PC-9 (cell line): ENCODE measurements at regions of chr6 and their contacts with region 1.

Region 1: DNA sequence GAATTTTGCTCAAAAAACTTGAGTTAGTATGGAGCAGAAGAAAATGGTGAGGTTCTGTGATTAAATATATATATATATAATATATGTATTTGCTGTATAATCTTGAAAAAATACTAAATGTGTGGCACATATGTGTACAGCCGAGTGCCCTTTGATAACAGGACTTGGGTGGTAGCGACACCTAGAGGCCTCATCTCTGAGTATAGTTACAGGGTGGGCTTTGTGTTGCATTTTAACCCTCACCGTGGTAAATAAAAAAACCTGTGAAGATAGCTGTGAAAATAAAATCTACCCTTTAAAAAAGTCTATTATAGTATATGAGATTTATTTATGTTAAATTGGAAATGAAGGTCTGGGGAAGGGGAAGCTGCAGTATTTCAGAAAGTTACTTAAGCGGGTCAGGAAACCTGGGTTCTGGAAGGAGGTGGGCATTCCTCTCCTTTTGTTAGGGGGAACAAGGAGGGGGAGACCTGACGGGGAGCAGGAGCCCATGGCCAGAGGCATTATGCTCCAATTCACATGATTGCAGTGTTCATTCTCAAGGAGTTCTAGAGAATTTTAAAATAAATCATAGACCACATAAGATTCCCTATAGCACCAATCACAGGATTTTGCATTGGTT is 82.7 kb downstream of the SH3BGRL2 start:
- DNase-seq: peak in 1 of 2 experiments; percentile 45
- H3K4me3 ChIP-seq: no peak overlapping the region
- H3K27ac ChIP-seq: no peak overlapping the region
- H3K4me1 ChIP-seq: no peaks in the 10 kb centered on the region
- H3K27me3 ChIP-seq: no peaks in the 10 kb centered on the region
- CTCF ChIP-seq: peak; percentile 75

Region 2: GRCh38 chr6:79466207-79466834 is 247.5 kb before region 1 on chr6:
- CTCF ChIA-PET with region 1: no interaction called
- POLR2A ChIA-PET with region 1: no interaction called
- intact Hi-C with region 1: loop called (anchors 5 kb)
- DNase-seq: no peak
- H3K4me3 ChIP-seq: no peak overlapping the region
- H3K27ac ChIP-seq: no peak overlapping the region
- H3K4me1 ChIP-seq: peaks cover 18% of the 10 kb centered on the region
- H3K27me3 ChIP-seq: no peaks in the 10 kb centered on the region
- CTCF ChIP-seq: peak; percentile 71

Region 3: GRCh38 chr6:79598012-79598411 is 115.8 kb before region 1 on chr6:
- CTCF ChIA-PET with region 1: no interaction called
- POLR2A ChIA-PET with region 1: no interaction called
- intact Hi-C with region 1: no loop called
- DNase-seq: no peak
- H3K4me3 ChIP-seq: no peak overlapping the region
- H3K27ac ChIP-seq: no peak overlapping the region
- H3K4me1 ChIP-seq: peaks cover 16% of the 10 kb centered on the region
- H3K27me3 ChIP-seq: no peaks in the 10 kb centered on the region
- CTCF ChIP-seq: no peak

Region 4: GRCh38 chr6:79949233-79949632 is 235.4 kb after region 1 on chr6:
- CTCF ChIA-PET with region 1: no interaction called
- POLR2A ChIA-PET with region 1: no interaction called
- intact Hi-C with region 1: no loop called
- DNase-seq: peak; percentile 8 to 48
- H3K4me3 ChIP-seq: no peak overlapping the region
- H3K27ac ChIP-seq: no peak overlapping the region
- H3K4me1 ChIP-seq: no peaks in the 10 kb centered on the region
- H3K27me3 ChIP-seq: no peaks in the 10 kb centered on the region
- CTCF ChIP-seq: peak; percentile 71